ENCODE measurements at regions of chr10 and their contacts with region 1.

Region 1: DNA sequence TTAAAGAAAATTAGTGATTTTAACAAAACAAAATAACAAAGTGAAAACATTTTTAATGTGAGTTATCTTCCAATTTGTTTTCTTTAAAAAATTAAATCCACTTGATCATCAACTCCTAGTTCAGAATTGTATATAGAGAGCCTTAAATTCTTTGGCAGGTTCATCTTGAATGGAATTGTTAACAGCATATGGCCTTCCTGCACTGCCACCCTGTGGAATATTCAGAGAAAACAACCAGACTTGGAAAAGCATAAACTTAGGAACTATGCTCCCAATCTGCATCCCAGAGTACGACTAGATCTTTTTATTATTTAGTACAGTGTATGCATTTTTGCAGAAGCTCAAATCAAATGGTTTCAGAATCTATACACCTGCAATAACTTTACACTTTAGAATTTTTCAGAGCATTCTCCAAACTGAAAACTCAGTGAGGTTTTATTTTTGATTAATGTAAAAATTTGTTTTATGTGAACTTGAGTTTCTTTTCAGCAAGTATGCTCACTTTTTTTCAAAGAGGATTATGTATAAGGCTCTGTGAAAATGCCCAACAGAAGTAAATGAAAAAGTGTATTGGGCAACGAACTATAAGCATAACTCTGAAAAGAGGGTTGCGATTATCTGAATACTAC is 44.9 kb upstream of the ANK3 start:
- DNase-seq: peak; percentile 33
- H3K4me3 Mint-ChIP-seq: no peak overlapping the region
- H3K27ac Mint-ChIP-seq: no peak overlapping the region
- H3K4me1 Mint-ChIP-seq: no peaks in the 10 kb centered on the region
- H3K27me3 Mint-ChIP-seq: no peaks in the 10 kb centered on the region

Region 2: GRCh38 chr10:60099998-60100747 is 334.4 kb before region 1 on chr10:
- CTCF ChIA-PET with region 1: interaction called, 3 read pairs
- intact Hi-C with region 1: loop called (anchors 1 kb)
- DNase-seq: peak; percentile 8
- H3K4me3 Mint-ChIP-seq: no peak overlapping the region
- H3K27ac Mint-ChIP-seq: no peak overlapping the region
- H3K4me1 Mint-ChIP-seq: no peaks in the 10 kb centered on the region
- H3K27me3 Mint-ChIP-seq: no peaks in the 10 kb centered on the region

Region 3: GRCh38 chr10:60114765-60115586 is 319.6 kb before region 1 on chr10:
- CTCF ChIA-PET with region 1: interaction called, 6 read pairs
- intact Hi-C with region 1: loop called (anchors 1 kb)
- DNase-seq: peak; percentile 8
- H3K4me3 Mint-ChIP-seq: no peak overlapping the region
- H3K27ac Mint-ChIP-seq: no peak overlapping the region
- H3K4me1 Mint-ChIP-seq: no peaks in the 10 kb centered on the region
- H3K27me3 Mint-ChIP-seq: no peaks in the 10 kb centered on the region

Region 4: DNA sequence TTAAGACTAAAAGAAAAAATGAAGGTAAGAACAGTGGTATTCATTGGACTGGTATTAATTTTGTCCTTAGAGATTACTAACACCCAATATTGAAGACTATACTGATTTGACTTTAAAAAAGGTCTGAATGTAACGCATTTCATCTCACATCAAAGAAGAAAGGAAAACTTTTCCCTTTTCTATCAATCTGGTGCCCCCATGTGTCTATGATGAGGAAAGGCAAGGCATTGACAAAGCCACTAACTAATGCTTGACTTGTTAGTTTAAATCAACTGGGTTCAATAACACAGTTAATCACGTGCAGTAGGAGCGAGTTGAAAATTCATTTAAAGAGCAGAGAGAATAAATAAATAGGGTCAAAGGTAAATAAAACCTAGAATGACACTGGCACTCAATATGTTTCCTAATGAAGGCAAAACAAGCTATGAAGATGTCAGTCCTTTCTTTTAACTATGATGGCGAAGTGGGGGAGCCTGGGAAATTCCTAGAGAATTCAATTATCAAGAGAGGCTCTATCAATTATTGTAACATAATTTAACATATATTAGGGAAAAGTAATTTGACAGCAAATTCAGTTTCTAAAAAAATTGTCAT is 225.8 kb before region 1 on chr10:
- CTCF ChIA-PET with region 1: interaction called, 5 read pairs
- intact Hi-C with region 1: loop called (anchors 1 kb)
- DNase-seq: no peak
- H3K4me3 Mint-ChIP-seq: no peak overlapping the region
- H3K27ac Mint-ChIP-seq: no peak overlapping the region
- H3K4me1 Mint-ChIP-seq: peaks cover 17% of the 10 kb centered on the region
- H3K27me3 Mint-ChIP-seq: no peaks in the 10 kb centered on the region

Region 5: GRCh38 chr10:60237977-60238758 is 196.4 kb before region 1 on chr10:
- CTCF ChIA-PET with region 1: interaction called, 3 read pairs
- intact Hi-C with region 1: loop called (anchors 2 kb)
- DNase-seq: peak; percentile 34
- H3K4me3 Mint-ChIP-seq: no peak overlapping the region
- H3K27ac Mint-ChIP-seq: peak overlapping the region; percentile 11
- H3K4me1 Mint-ChIP-seq: peaks cover 17% of the 10 kb centered on the region
- H3K27me3 Mint-ChIP-seq: no peaks in the 10 kb centered on the region

Region 6: GRCh38 chr10:60334991-60335390 is 99.5 kb before region 1 on chr10:
- CTCF ChIA-PET with region 1: interaction called, 3 read pairs
- intact Hi-C with region 1: loop called (anchors 5 kb)
- DNase-seq: no peak
- H3K4me3 Mint-ChIP-seq: no peak overlapping the region
- H3K27ac Mint-ChIP-seq: no peak overlapping the region
- H3K4me1 Mint-ChIP-seq: no peaks in the 10 kb centered on the region
- H3K27me3 Mint-ChIP-seq: no peaks in the 10 kb centered on the region